ENCODE measurements at regions of chr15 and their contacts with region 1.

Region 1: DNA sequence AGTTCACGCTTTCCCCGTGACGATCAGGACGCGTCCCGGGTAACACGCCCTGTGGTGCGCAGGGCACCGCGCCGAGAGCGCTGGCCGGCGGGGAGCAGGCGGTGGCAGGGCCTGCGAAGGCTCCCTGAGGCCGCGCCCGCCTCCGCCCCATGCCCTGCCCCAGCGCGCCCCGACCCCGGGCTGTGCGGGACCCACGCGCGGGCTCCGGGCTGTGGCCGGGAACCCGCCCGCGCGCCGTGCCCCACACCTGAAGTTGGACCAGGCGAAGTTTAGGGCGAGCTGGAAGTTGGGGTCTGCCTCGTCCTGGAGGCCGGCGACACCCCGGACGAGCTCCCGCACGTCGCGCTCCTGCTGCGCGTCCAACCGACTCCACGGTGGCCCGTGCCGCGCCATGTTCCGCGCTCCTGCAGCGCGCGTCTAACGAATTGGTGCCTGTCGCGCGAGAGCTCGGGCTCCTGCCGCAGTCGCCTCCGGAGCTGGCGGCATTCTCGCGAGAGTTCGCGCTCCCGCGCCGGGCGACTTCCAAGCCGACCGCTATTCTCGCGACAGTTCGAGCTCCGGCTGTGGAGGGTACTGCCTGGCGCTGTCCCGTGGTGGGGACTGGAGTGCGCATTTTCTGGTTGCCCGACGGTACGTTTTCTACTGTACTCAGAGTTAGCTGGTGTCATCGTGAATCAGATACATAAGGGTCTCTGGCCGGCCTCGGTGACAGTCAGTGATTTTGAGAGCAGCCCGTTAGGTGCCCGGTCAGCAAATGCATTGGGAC is at the start of gene TUBGCP5:
- DNase-seq: peak; percentile 93 to 98
- H3K4me3 ChIP-seq: peak within 1 kb of the TSS; percentile 50 to 78 (median 73)
- H3K27ac ChIP-seq: peak within 1 kb of the TSS; percentile 73; the same call in 1 of the 2 replicates
- H3K4me1 ChIP-seq: peaks cover 0 to 3% (median 2%) of the 10 kb centered on the region in 4 experiments; a peak in 2 of 7 replicates
- H3K27me3 ChIP-seq: no peaks in the 10 kb centered on the region
- CTCF ChIP-seq: peak in 2 of 3 experiments; percentile 1 to 28; a peak in 1 of 4 replicates
- EP300 ChIP-seq: no peak
- POLR2A ChIP-seq: peak; percentile 85 to 97
- RAD21 ChIP-seq: peak in 1 of 2 experiments; percentile 11; a peak in 1 of 4 replicates
- total RNA-seq, gene TUBGCP5: 12.5 and 12.7 TPM in 2 replicates

Region 2: DNA sequence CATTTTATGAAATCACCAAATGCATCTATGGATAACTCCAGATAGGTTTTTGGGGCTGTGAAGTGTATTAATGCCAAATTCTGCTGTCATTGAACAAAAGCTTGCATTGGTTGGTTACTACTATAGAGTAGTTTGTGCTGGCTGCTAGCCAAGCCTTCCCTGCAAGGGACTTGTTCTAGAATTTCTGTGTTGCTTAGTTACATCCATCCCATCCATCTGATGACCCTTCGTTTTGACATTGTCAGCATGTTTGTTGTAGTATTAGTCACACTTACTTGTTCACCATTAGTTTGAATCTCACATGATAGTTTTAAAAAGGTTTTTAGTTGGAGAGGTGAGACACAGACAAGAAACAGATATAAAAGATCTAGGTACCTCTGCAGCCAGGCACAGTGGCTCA is 207.9 kb before region 1 on chr15:
- CTCF ChIA-PET with region 1: no interaction called
- POLR2A ChIA-PET with region 1: no interaction called
- DNase-seq: no peak
- H3K4me3 ChIP-seq: no peak overlapping the region
- H3K27ac ChIP-seq: no peak overlapping the region
- H3K4me1 ChIP-seq: peaks cover 8 to 18% (median 9%) of the 10 kb centered on the region in 4 experiments
- H3K27me3 ChIP-seq: peaks cover 0 to 3% (median 0%) of the 10 kb centered on the region in 4 experiments; a peak in 3 of 7 replicates
- CTCF ChIP-seq: no peak
- EP300 ChIP-seq: no peak
- POLR2A ChIP-seq: no peak
- RAD21 ChIP-seq: no peak

Region 3: GRCh38 chr15:23003736-23004135 is 35.6 kb before region 1 on chr15:
- CTCF ChIA-PET with region 1: interaction called, 14 read pairs
- POLR2A ChIA-PET with region 1: no interaction called
- DNase-seq: no peak
- H3K4me3 ChIP-seq: no peak overlapping the region
- H3K27ac ChIP-seq: no peak overlapping the region
- H3K4me1 ChIP-seq: no peaks in the 10 kb centered on the region
- H3K27me3 ChIP-seq: no peaks in the 10 kb centered on the region
- CTCF ChIP-seq: no peak
- EP300 ChIP-seq: no peak
- POLR2A ChIP-seq: no peak
- RAD21 ChIP-seq: no peak

Region 4: DNA sequence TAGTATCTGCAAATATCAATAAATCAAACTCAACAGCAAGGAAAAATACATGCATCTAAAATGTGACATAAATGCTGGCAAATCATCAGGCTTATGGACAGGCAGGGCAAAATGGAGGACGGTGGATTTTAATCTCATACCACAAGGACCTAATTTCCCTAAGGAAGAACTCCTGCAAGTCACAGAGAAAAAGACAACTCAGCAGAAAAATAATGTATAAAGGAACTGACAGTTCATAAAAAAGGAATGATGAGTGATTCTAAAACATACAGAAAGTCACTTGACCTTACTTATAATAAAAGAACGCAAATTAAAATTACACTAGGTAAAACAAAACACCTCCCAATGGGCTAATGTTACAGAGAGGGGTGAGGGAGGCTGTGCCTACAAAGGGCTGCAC is 17.2 kb before region 1 on chr15:
- CTCF ChIA-PET with region 1: interaction called, 15 read pairs
- POLR2A ChIA-PET with region 1: interaction called, 6 read pairs
- DNase-seq: no peak
- H3K4me3 ChIP-seq: no peak overlapping the region
- H3K27ac ChIP-seq: no peak overlapping the region
- H3K4me1 ChIP-seq: no peaks in the 10 kb centered on the region
- H3K27me3 ChIP-seq: no peaks in the 10 kb centered on the region
- CTCF ChIP-seq: no peak
- EP300 ChIP-seq: no peak
- POLR2A ChIP-seq: no peak
- RAD21 ChIP-seq: no peak

Region 5: GRCh38 chr15:23118203-23118602 is 78.9 kb after region 1 on chr15:
- CTCF ChIA-PET with region 1: no interaction called
- POLR2A ChIA-PET with region 1: no interaction called
- DNase-seq: no peak
- H3K4me3 ChIP-seq: no peak overlapping the region
- H3K27ac ChIP-seq: no peak overlapping the region
- H3K4me1 ChIP-seq: no peaks in the 10 kb centered on the region
- H3K27me3 ChIP-seq: no peaks in the 10 kb centered on the region
- CTCF ChIP-seq: no peak
- EP300 ChIP-seq: no peak
- POLR2A ChIP-seq: no peak
- RAD21 ChIP-seq: no peak

Measured in H1 (cell line).